Esophagus muscularis mucosa (tissue), 4 donors: ENCODE measurements at regions of chr12 and their contacts with region 1.

Region 1: DNA sequence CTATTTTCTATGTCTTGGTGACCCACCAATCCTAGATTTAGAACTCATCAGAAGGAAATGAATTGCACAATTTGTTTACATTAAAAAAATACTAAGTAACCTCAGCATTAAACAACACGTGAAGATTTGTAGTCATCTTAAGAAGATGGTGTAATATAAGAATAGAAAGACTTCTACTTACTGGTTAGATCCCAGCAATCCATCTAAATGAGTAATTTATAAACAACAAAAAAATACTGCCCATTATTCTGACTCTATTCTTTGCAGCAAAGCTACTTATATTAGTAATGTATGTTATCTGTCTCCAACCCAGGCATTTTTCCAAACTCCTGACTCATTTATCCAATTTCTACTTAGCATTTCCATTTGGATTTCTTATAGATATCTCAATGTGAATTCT is 67.8 kb downstream of the CD163L1 start:
- DNase-seq: no peak
- H3K4me3 ChIP-seq: no peak overlapping the region
- H3K27ac ChIP-seq: no peak overlapping the region
- H3K4me1 ChIP-seq: no peaks in the 10 kb centered on the region
- H3K27me3 ChIP-seq: peaks cover 0 to 3% (median 0%) of the 10 kb centered on the region in 4 donors
- CTCF ChIP-seq: no peak
- EP300 ChIP-seq: no peak
- POLR2A ChIP-seq: no peak

Region 2: GRCh38 chr12:7303230-7303629 is 73.0 kb before region 1 on chr12:
- intact Hi-C with region 1: loop called (anchors 2 kb)
- DNase-seq: no peak
- H3K4me3 ChIP-seq: no peak overlapping the region
- H3K27ac ChIP-seq: no peak overlapping the region
- H3K4me1 ChIP-seq: no peaks in the 10 kb centered on the region
- H3K27me3 ChIP-seq: no peaks in the 10 kb centered on the region
- CTCF ChIP-seq: no peak
- EP300 ChIP-seq: no peak
- POLR2A ChIP-seq: no peak

Region 3: GRCh38 chr12:7472060-7472459 is 95.9 kb after region 1 on chr12:
- intact Hi-C with region 1: no loop called
- DNase-seq: no peak
- H3K4me3 ChIP-seq: no peak overlapping the region
- H3K27ac ChIP-seq: no peak overlapping the region
- H3K4me1 ChIP-seq: no peaks in the 10 kb centered on the region
- H3K27me3 ChIP-seq: no peaks in the 10 kb centered on the region
- CTCF ChIP-seq: no peak
- EP300 ChIP-seq: no peak
- POLR2A ChIP-seq: no peak